K562 (cell line): ENCODE measurements at regions of chr9 and their contacts with region 1.

Region 1: GRCh38 chr9:5628530-5629311 is at the start of gene RIC1:
- DNase-seq: peak; percentile 86 to 92 (median 90)
- ATAC-seq: peak; percentile 82
- H3K4me3 ChIP-seq: peak within 1 kb of the TSS; percentile 95
- H3K27ac ChIP-seq: peak within 1 kb of the TSS; percentile 87
- H3K4me1 ChIP-seq: peaks cover 0 to 7% of the 10 kb centered on the region in 2 experiments; a peak in 3 of 5 replicates
- H3K27me3 ChIP-seq: no peaks in the 10 kb centered on the region
- CTCF ChIP-seq: no peak
- EP300 ChIP-seq: no peak
- POLR2A ChIP-seq: peak; percentile 87
- RAD21 ChIP-seq: no peak
- polyA plus RNA-seq, gene RIC1: 3.2 to 4.2 TPM

Region 2: GRCh38 chr9:5582835-5583195 is 45.9 kb before region 1 on chr9:
- CTCF ChIA-PET with region 1: no interaction called
- POLR2A ChIA-PET with region 1: no interaction called
- in situ Hi-C with region 1: no loop called
- intact Hi-C with region 1: no loop called
- DNase-seq: no peak
- ATAC-seq: no peak
- H3K4me3 ChIP-seq: no peak overlapping the region
- H3K27ac ChIP-seq: no peak overlapping the region
- H3K4me1 ChIP-seq: no peaks in the 10 kb centered on the region; a peak in 1 of 5 replicates
- H3K27me3 ChIP-seq: no peaks in the 10 kb centered on the region
- CTCF ChIP-seq: no peak
- EP300 ChIP-seq: no peak
- POLR2A ChIP-seq: no peak
- RAD21 ChIP-seq: no peak

Region 3: GRCh38 chr9:5650356-5651105 is 21.8 kb after region 1 on chr9:
- CTCF ChIA-PET with region 1: no interaction called
- POLR2A ChIA-PET with region 1: no interaction called
- in situ Hi-C with region 1: no loop called
- intact Hi-C with region 1: no loop called
- DNase-seq: no peak
- ATAC-seq: no peak; the same call in 2 of the 3 replicates
- H3K4me3 ChIP-seq: no peak overlapping the region
- H3K27ac ChIP-seq: no peak overlapping the region
- H3K4me1 ChIP-seq: no peaks in the 10 kb centered on the region; a peak in 1 of 5 replicates
- H3K27me3 ChIP-seq: no peaks in the 10 kb centered on the region
- CTCF ChIP-seq: no peak
- EP300 ChIP-seq: no peak
- POLR2A ChIP-seq: no peak
- RAD21 ChIP-seq: no peak

Region 4: DNA sequence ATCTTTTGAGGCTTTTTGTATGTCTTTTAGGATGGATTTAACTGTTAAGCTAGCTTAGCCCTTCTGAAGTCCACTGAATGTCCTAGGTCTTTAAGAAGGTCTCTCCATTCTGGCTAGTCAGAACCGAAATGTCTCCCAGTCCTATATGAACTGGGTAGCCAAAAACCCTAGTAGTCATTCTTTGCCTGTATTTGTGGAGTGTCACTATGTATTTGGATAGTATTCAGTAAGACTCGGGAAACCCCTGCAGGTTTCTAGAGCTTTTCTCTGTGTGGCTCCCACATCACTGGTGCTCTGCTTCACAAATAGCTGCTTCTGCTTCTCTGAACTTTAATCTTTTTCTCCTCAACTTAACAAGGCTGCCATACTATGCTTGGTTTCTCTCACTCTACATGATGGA is 68.2 kb after region 1 on chr9:
- CTCF ChIA-PET with region 1: no interaction called
- POLR2A ChIA-PET with region 1: no interaction called
- in situ Hi-C with region 1: no loop called
- intact Hi-C with region 1: loop called (anchors 5 kb)
- DNase-seq: no peak
- ATAC-seq: no peak
- H3K4me3 ChIP-seq: no peak overlapping the region
- H3K27ac ChIP-seq: no peak overlapping the region
- H3K4me1 ChIP-seq: no peaks in the 10 kb centered on the region
- H3K27me3 ChIP-seq: no peaks in the 10 kb centered on the region
- CTCF ChIP-seq: no peak
- EP300 ChIP-seq: no peak
- POLR2A ChIP-seq: no peak
- RAD21 ChIP-seq: no peak

Region 5: DNA sequence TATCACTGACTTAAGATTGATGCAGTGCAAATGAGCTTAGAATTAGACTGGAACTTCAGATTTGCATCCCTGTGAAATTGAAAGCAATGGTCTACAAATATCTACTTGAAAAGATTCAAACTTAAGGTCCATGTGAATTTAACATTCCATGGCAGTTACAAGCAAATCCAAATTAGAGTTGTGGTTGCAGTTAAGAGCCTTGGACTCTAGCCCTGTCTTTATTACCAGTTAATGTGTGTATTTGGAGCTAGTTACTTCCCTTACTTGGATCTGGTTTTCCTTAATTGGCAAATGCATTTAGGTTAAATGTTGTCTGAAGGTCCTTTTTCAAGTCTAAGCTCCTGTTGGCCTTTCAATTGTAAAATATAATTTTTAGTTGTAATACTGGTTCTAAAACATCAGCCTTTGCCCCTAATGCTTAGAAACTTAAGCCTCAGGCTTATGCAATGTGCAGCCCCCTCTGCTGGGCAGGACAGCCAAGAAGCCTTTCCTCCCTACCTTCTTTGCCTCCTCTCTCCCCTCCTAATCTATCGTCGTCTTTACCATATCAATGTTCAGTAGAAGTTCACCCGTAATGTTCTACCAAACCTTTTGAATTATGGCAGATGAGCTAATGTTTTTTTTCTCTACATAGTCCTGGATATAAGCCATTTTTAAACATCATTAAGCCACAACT is 144.7 kb after region 1 on chr9:
- CTCF ChIA-PET with region 1: no interaction called
- POLR2A ChIA-PET with region 1: no interaction called
- in situ Hi-C with region 1: no loop called
- intact Hi-C with region 1: loop called (anchors 5 kb)
- DNase-seq: peak in 1 of 4 experiments; percentile 4
- ATAC-seq: no peak
- H3K4me3 ChIP-seq: no peak overlapping the region
- H3K27ac ChIP-seq: no peak overlapping the region
- H3K4me1 ChIP-seq: no peaks in the 10 kb centered on the region
- H3K27me3 ChIP-seq: no peaks in the 10 kb centered on the region
- CTCF ChIP-seq: no peak; a peak in 1 of 6 replicates
- EP300 ChIP-seq: no peak
- POLR2A ChIP-seq: no peak
- RAD21 ChIP-seq: no peak

Region 6: DNA sequence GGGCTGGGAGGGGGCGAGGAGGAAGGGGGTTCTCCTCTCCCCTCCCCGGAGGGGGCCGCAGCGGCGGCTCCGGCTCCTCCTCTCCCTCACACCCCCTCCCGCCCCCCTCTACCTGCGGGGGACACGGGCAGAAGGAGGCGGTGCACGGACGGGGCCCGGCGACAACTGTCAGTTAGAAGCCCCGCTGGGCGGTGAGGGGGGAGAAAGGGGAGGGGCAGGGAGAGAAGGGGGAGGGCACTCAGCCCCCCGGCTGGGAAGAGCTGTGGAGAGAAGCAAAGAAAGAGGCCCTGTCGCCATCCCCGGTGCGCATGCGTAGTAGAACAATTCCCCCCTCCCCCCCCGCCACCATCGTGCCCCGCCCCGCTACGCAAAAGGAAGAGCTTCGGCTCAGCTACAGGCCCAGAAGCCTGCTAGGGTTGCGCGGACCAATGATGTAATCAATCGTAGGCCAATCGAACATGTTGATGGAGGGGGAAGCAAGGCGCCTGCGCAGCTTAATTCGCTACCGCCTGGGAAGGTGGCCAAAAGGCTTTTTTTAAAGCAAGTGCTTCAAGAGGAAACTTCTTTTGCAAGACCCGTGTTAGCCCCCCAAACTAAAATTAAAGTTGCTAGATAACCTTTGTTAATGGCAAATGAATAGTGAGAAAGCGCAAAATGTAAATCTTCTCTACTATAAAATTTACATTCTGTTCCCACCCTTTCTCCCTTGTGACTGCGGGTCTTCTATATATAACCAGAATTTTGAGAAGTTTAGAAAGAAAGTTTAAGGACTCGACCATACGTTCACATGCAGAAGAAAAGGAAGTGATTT is 379.7 kb after region 1 on chr9:
- CTCF ChIA-PET with region 1: no interaction called
- POLR2A ChIA-PET with region 1: interaction called, 3 read pairs
- in situ Hi-C with region 1: no loop called
- intact Hi-C with region 1: loop called (anchors 5 kb)
- DNase-seq: peak; percentile 87 to 96 (median 89)
- ATAC-seq: peak; percentile 73
- H3K4me3 ChIP-seq: peak overlapping the region; percentile 80
- H3K27ac ChIP-seq: peak overlapping the region; percentile 84
- H3K4me1 ChIP-seq: peaks cover 7 to 17% of the 10 kb centered on the region in 2 experiments; a peak in 3 of 5 replicates
- H3K27me3 ChIP-seq: no peaks in the 10 kb centered on the region
- CTCF ChIP-seq: no peak
- EP300 ChIP-seq: no peak
- POLR2A ChIP-seq: peak; percentile 69
- RAD21 ChIP-seq: no peak